ENCODE measurements at regions of chr5 and their contacts with region 1.

Region 1: GRCh38 chr5:181181650-181182565 is 23.1 kb downstream of the TRIM7 start:
- DNase-seq: no peak
- ATAC-seq: peak; percentile 79
- H3K4me3 ChIP-seq: no peak overlapping the region
- H3K27ac ChIP-seq: no peak overlapping the region
- H3K4me1 ChIP-seq: peaks cover 11% of the 10 kb centered on the region
- H3K27me3 ChIP-seq: no peaks in the 10 kb centered on the region
- CTCF ChIP-seq: peak; percentile 79 to 85 (median 84)
- EP300 ChIP-seq: no peak; a peak in 1 of 4 replicates
- POLR2A ChIP-seq: no peak
- RAD21 ChIP-seq: peak; percentile 89

Region 2: DNA sequence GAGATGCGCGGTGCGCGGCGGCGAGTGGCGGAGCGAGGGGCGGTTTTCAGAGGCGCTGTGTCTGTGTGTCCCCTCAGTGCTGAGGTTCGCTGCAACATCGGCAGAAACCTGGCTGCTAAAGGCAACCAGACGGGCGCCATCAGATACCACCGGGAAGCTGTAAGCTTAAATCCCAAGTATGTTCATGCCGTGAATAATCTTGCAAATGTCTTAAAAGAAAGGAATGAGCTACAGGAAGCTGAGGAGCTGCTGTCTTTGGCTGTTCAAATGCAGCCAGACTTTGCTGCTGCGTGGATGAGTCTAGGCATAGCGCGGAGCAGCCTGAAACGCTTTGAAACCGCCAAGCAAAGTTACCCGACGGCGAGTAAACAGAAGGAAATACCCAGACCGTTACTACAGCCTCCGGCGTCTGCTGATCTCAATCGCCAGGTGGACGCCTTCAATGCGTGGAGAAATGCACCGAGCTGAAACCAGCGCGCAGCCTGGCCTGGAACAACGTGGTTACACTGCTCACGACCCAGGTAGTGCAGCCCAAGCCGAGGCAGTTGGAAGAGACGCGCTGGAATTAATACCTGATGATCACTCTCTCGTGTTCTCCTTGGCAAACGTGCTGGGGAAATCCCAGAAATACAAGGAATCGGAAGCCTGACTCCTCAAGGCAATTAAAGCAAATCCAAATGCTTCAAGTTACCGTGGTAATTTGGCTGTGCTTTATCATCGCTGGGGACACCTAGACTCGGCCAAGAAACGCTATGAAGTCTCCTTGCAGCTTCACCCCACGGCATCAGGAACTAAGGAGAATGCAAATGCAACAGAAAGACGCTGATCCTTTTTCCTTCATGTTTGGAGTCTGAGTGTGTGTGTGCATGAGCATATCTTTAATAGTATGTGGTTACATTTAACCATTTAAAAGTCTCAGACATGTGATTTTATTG is 66.8 kb before region 1 on chr5:
- CTCF ChIA-PET with region 1: no interaction called
- POLR2A ChIA-PET with region 1: no interaction called
- RAD21 ChIA-PET with region 1: no interaction called
- SMC1A ChIA-PET with region 1: no interaction called
- in situ Hi-C with region 1: no loop called
- intact Hi-C with region 1: no loop called
- DNase-seq: no peak
- ATAC-seq: no peak
- H3K4me3 ChIP-seq: no peak overlapping the region
- H3K27ac ChIP-seq: no peak overlapping the region
- H3K4me1 ChIP-seq: no peaks in the 10 kb centered on the region
- H3K27me3 ChIP-seq: peaks cover 0 to 3% of the 10 kb centered on the region in 2 experiments; a peak in 2 of 4 replicates
- CTCF ChIP-seq: no peak
- EP300 ChIP-seq: no peak
- POLR2A ChIP-seq: no peak
- RAD21 ChIP-seq: no peak

Region 3: GRCh38 chr5:181126841-181127240 is 55.1 kb before region 1 on chr5:
- CTCF ChIA-PET with region 1: no interaction called
- POLR2A ChIA-PET with region 1: no interaction called
- RAD21 ChIA-PET with region 1: no interaction called
- SMC1A ChIA-PET with region 1: no interaction called
- in situ Hi-C with region 1: no loop called
- intact Hi-C with region 1: no loop called
- DNase-seq: no peak
- ATAC-seq: no peak
- H3K4me3 ChIP-seq: no peak overlapping the region
- H3K27ac ChIP-seq: no peak overlapping the region
- H3K4me1 ChIP-seq: no peaks in the 10 kb centered on the region
- H3K27me3 ChIP-seq: peaks cover 0 to 3% of the 10 kb centered on the region in 2 experiments; a peak in 2 of 4 replicates
- CTCF ChIP-seq: no peak
- EP300 ChIP-seq: no peak
- POLR2A ChIP-seq: no peak
- RAD21 ChIP-seq: no peak

Region 4: GRCh38 chr5:181167814-181168488 is 14.0 kb before region 1 on chr5:
- CTCF ChIA-PET with region 1: interaction called, 31 read pairs
- POLR2A ChIA-PET with region 1: interaction called, 7 read pairs
- RAD21 ChIA-PET with region 1: interaction called, 10 read pairs
- SMC1A ChIA-PET with region 1: interaction called, 10 read pairs
- in situ Hi-C with region 1: no loop called
- intact Hi-C with region 1: loop called (anchors 1 kb)
- DNase-seq: no peak
- ATAC-seq: peak; percentile 43
- H3K4me3 ChIP-seq: no peak overlapping the region
- H3K27ac ChIP-seq: no peak overlapping the region
- H3K4me1 ChIP-seq: peaks cover 32% of the 10 kb centered on the region
- H3K27me3 ChIP-seq: no peaks in the 10 kb centered on the region
- CTCF ChIP-seq: peak; percentile 54 to 61 (median 54)
- EP300 ChIP-seq: no peak
- POLR2A ChIP-seq: no peak
- RAD21 ChIP-seq: peak; percentile 26; the same call in 1 of the 2 replicates

Region 5: GRCh38 chr5:181207214-181208107 is 25.6 kb after region 1 on chr5:
- CTCF ChIA-PET with region 1: interaction called, 13 read pairs
- POLR2A ChIA-PET with region 1: interaction called, 5 read pairs
- RAD21 ChIA-PET with region 1: interaction called, 17 read pairs
- SMC1A ChIA-PET with region 1: interaction called, 40 read pairs
- in situ Hi-C with region 1: no loop called
- intact Hi-C with region 1: no loop called
- DNase-seq: no peak
- ATAC-seq: peak; percentile 59
- H3K4me3 ChIP-seq: peak overlapping the region; percentile 83
- H3K27ac ChIP-seq: peak overlapping the region; percentile 51
- H3K4me1 ChIP-seq: peaks cover 14% of the 10 kb centered on the region
- H3K27me3 ChIP-seq: peaks cover 4 to 8% of the 10 kb centered on the region in 2 experiments; a peak in 3 of 4 replicates
- CTCF ChIP-seq: no peak
- EP300 ChIP-seq: no peak
- POLR2A ChIP-seq: no peak
- RAD21 ChIP-seq: no peak

Region 6: DNA sequence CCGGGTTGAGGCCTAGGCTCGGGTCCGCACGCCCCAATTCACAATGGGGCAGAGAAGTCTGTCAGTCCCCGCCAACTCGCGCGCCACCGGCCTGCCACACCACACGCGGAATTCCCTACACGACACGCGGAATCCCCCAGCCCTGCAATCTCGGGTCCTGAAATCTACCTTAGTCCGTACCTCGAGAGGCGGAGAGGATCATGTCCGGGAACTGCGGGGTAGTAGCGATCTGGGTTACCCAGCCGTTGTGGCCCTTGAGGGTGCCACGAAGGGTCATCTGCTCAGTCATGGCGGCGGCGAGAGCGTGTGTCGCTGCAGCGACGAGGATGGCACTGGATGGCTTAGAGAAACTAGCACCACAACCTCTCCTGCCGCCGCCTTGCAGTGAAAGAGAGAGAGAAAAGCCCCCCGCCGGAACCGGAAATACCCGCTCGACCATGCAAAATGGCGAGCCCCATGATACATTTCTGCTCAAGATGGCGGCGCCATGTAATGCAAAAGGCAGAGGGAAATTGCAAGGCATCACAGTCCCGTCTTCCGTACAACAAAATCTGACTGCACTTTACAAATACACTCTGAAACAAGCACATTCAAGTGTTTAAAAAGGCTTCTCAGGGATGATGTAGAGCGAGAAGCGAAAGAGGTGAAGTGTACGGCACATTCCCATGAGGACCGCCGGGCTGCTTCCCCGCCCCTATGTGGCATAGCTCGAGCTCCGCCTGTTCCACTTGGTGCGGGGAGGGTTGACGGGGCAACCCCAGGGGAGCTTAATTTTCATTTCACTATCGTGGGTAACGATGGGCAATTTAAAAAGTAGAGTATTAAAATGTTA is 61.8 kb after region 1 on chr5 and contains the start of gene RACK1:
- CTCF ChIA-PET with region 1: interaction called, 12 read pairs
- POLR2A ChIA-PET with region 1: interaction called, 13 read pairs
- RAD21 ChIA-PET with region 1: interaction called, 3 read pairs
- SMC1A ChIA-PET with region 1: no interaction called
- in situ Hi-C with region 1: no loop called
- intact Hi-C with region 1: no loop called
- DNase-seq: peak; percentile 89
- ATAC-seq: peak; percentile 66
- H3K4me3 ChIP-seq: peak within 1 kb of the TSS; percentile 98
- H3K27ac ChIP-seq: peak within 1 kb of the TSS; percentile 92
- H3K4me1 ChIP-seq: peaks cover 27% of the 10 kb centered on the region
- H3K27me3 ChIP-seq: no peaks in the 10 kb centered on the region
- CTCF ChIP-seq: no peak
- EP300 ChIP-seq: no peak
- POLR2A ChIP-seq: peak; percentile 99
- RAD21 ChIP-seq: no peak
- polyA plus RNA-seq, gene RACK1: 3,729 to 5,412 TPM

Region 7: GRCh38 chr5:181271081-181271480 is 89.2 kb after region 1 on chr5:
- CTCF ChIA-PET with region 1: no interaction called
- POLR2A ChIA-PET with region 1: no interaction called
- RAD21 ChIA-PET with region 1: no interaction called
- SMC1A ChIA-PET with region 1: no interaction called
- in situ Hi-C with region 1: no loop called
- intact Hi-C with region 1: no loop called
- DNase-seq: no peak
- ATAC-seq: no peak
- H3K4me3 ChIP-seq: no peak overlapping the region
- H3K27ac ChIP-seq: no peak overlapping the region
- H3K4me1 ChIP-seq: no peaks in the 10 kb centered on the region
- H3K27me3 ChIP-seq: no peaks in the 10 kb centered on the region
- CTCF ChIP-seq: no peak
- EP300 ChIP-seq: no peak
- POLR2A ChIP-seq: no peak
- RAD21 ChIP-seq: no peak